ENCODE measurements at regions of chr13 and their contacts with region 1.

Region 1: GRCh38 chr13:51452361-51453206 is at the start of gene INTS6:
- DNase-seq: peak; percentile 98 to 100 (median 100)
- H3K4me3 ChIP-seq: peak within 1 kb of the TSS; percentile 62 to 82
- H3K4me3 Mint-ChIP-seq: peak within 1 kb of the TSS; percentile 89 to 96 (median 94)
- H3K27ac ChIP-seq: peak within 1 kb of the TSS; percentile 97
- H3K27ac Mint-ChIP-seq: peak within 1 kb of the TSS; percentile 94 to 99 (median 98)
- H3K4me1 ChIP-seq: peaks cover 42% of the 10 kb centered on the region
- H3K4me1 Mint-ChIP-seq: peaks cover 34 to 65% (median 40%) of the 10 kb centered on the region in 4 donors
- H3K27me3 ChIP-seq: no peaks in the 10 kb centered on the region
- H3K27me3 Mint-ChIP-seq: peaks cover 0 to 1% of the 10 kb centered on the region in 2 donors
- total RNA-seq, gene INTS6: 55.7 to 65.6 TPM

Region 2: GRCh38 chr13:49936085-49936940 is 1516.3 kb before region 1 on chr13 and contains the start of gene SPRYD7:
- CTCF ChIA-PET with region 1: no interaction called
- POLR2A ChIA-PET with region 1: interaction called, 3 read pairs
- intact Hi-C with region 1: loop called (anchors 5 kb)
- DNase-seq: peak; percentile 89 to 92 (median 92)
- H3K4me3 ChIP-seq: peak within 1 kb of the TSS; percentile 66 to 96
- H3K4me3 Mint-ChIP-seq: peak within 1 kb of the TSS; percentile 91 to 97 (median 95)
- H3K27ac ChIP-seq: peak within 1 kb of the TSS; percentile 63
- H3K27ac Mint-ChIP-seq: peak within 1 kb of the TSS; percentile 85 to 97 (median 94)
- H3K4me1 ChIP-seq: peaks cover 19% of the 10 kb centered on the region
- H3K4me1 Mint-ChIP-seq: peaks cover 12 to 23% (median 15%) of the 10 kb centered on the region in 4 donors
- H3K27me3 ChIP-seq: no peaks in the 10 kb centered on the region
- H3K27me3 Mint-ChIP-seq: no peaks in the 10 kb centered on the region
- total RNA-seq, gene SPRYD7: 3.3 to 5.1 TPM

Region 3: GRCh38 chr13:51435002-51435578 is 17.5 kb before region 1 on chr13:
- CTCF ChIA-PET with region 1: interaction called, 5 read pairs
- POLR2A ChIA-PET with region 1: interaction called, 68 read pairs
- intact Hi-C with region 1: loop called (anchors 2 kb)
- DNase-seq: peak in 4 of 5 donors; percentile 35 to 43 (median 42)
- H3K4me3 ChIP-seq: no peak overlapping the region
- H3K4me3 Mint-ChIP-seq: no peak overlapping the region
- H3K27ac ChIP-seq: no peak overlapping the region
- H3K27ac Mint-ChIP-seq: no peak overlapping the region
- H3K4me1 ChIP-seq: peaks cover 13% of the 10 kb centered on the region
- H3K4me1 Mint-ChIP-seq: peaks cover 12 to 20% (median 16%) of the 10 kb centered on the region in 4 donors
- H3K27me3 ChIP-seq: no peaks in the 10 kb centered on the region
- H3K27me3 Mint-ChIP-seq: no peaks in the 10 kb centered on the region

Region 4: DNA sequence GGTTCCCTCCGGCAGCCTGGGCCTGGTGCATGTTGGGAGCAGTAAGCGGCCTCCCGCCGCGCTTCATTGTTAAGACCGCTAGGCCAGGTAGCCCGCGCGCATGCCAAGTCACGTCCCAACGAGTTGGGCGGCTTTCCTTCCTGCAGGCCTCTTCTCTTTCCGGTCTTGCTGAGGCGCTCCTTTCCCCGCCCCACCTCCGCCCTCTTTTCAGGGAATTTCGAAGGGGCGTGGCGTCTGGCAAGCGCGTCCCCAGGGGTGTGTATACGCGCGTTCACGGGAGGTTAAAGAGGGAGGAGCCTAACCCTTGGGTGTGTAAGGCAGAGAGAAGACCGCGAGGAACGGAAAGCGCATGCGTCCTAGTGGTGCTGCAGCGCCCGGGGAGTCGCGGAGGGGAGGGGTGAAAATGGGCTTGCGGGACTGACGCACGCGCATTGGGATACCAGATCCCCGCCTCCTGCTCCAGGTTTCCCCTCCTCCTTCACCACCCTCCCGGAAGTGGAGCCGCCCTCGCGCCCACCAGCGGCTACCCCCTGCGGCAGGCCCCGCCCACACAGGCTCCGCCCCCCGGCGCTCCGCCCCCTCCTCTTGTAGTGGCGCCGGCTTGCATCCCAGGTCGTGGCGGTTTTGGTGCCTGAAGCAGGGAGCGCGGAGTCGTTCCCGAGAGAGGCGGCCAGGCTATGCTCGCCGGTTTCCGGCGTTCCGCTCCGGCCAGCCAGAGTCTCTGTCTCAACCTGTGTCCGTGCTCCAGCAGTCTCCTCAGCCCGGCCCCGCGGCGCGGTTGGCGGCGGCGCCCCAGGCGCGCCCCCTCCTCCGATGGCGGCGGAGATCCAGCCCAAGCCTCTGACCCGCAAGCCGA is 131.5 kb after region 1 on chr13 and contains the start of gene WDFY2:
- CTCF ChIA-PET with region 1: interaction called, 10 read pairs
- POLR2A ChIA-PET with region 1: interaction called, 205 read pairs
- intact Hi-C with region 1: loop called (anchors 1 kb)
- DNase-seq: peak; percentile 99 to 100 (median 100)
- H3K4me3 ChIP-seq: peak within 1 kb of the TSS; percentile 65 to 92
- H3K4me3 Mint-ChIP-seq: peak within 1 kb of the TSS; percentile 97 to 100 (median 99)
- H3K27ac ChIP-seq: peak within 1 kb of the TSS; percentile 88
- H3K27ac Mint-ChIP-seq: peak within 1 kb of the TSS; percentile 96 to 100 (median 100)
- H3K4me1 ChIP-seq: peaks cover 26% of the 10 kb centered on the region
- H3K4me1 Mint-ChIP-seq: peaks cover 27 to 44% (median 35%) of the 10 kb centered on the region in 4 donors
- H3K27me3 ChIP-seq: no peaks in the 10 kb centered on the region
- H3K27me3 Mint-ChIP-seq: no peaks in the 10 kb centered on the region
- total RNA-seq, gene WDFY2: 20.0 to 21.8 TPM

Region 5: DNA sequence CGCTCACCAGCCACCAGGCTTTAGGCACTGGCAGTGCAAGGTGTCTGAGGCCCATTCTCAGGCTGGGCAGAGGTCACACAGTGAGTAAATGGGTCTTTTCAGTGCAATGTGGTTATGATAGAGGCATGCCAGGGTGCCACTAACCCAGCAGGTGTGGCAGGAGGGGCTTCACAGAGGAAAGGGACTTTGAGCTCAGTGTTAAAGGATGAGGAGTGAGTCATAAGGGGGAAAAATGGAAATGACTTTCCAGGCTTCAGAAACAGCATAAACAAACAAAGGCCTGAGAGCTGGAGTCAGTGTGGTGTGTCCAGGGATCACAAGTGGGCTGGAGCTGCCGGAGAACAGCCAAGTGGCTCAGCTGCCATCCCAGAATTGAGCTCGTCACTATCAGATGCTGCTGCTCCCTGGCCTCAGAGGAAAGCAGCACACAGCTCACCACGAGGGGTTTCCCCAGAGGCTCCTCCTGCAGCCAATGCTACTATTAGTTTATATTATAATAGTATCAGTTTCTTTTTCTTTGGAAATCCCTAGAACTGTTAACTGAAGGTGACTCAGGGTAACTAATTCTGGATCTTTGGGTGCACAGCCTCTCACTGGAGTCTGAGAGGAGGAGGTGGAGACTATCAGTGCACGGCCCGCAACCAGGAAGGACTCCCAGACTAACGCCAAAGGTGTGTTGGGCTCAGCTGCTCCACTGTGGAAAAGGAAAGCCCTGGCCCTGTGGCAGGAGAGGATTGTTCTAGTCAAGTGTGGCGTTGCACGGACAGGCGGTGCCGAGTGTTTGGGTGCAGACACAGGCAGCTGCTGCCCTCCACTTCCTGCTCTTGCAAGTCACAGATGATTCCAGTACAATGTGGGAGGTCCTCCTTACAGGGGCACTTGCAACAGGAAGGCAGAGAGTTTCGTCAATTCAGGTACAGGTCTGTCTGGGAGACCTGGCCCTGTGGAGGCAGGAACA is 311.9 kb after region 1 on chr13:
- CTCF ChIA-PET with region 1: interaction called, 8 read pairs
- POLR2A ChIA-PET with region 1: interaction called, 37 read pairs
- intact Hi-C with region 1: no loop called
- DNase-seq: peak; percentile 35 to 82 (median 55)
- H3K4me3 ChIP-seq: peak overlapping the region in 1 of 2 donors; percentile 17
- H3K4me3 Mint-ChIP-seq: peak overlapping the region; percentile 80 to 91 (median 82)
- H3K27ac ChIP-seq: peak overlapping the region; percentile 80
- H3K27ac Mint-ChIP-seq: peak overlapping the region; percentile 92 to 96 (median 95)
- H3K4me1 ChIP-seq: peaks cover 22% of the 10 kb centered on the region
- H3K4me1 Mint-ChIP-seq: peaks cover 15 to 35% (median 24%) of the 10 kb centered on the region in 4 donors
- H3K27me3 ChIP-seq: no peaks in the 10 kb centered on the region
- H3K27me3 Mint-ChIP-seq: no peaks in the 10 kb centered on the region

Region 6: GRCh38 chr13:51825165-51825592 is 372.6 kb after region 1 on chr13:
- CTCF ChIA-PET with region 1: interaction called, 4 read pairs
- POLR2A ChIA-PET with region 1: interaction called, 117 read pairs
- intact Hi-C with region 1: loop called (anchors 1 kb)
- DNase-seq: peak; percentile 57 to 84 (median 79)
- H3K4me3 ChIP-seq: peak overlapping the region; percentile 31 to 56
- H3K4me3 Mint-ChIP-seq: peak overlapping the region; percentile 86 to 95 (median 90)
- H3K27ac ChIP-seq: peak overlapping the region; percentile 65
- H3K27ac Mint-ChIP-seq: peak overlapping the region; percentile 88 to 95 (median 94)
- H3K4me1 ChIP-seq: peaks cover 81% of the 10 kb centered on the region
- H3K4me1 Mint-ChIP-seq: peaks cover 56 to 99% (median 77%) of the 10 kb centered on the region in 4 donors
- H3K27me3 ChIP-seq: no peaks in the 10 kb centered on the region
- H3K27me3 Mint-ChIP-seq: no peaks in the 10 kb centered on the region

Region 7: DNA sequence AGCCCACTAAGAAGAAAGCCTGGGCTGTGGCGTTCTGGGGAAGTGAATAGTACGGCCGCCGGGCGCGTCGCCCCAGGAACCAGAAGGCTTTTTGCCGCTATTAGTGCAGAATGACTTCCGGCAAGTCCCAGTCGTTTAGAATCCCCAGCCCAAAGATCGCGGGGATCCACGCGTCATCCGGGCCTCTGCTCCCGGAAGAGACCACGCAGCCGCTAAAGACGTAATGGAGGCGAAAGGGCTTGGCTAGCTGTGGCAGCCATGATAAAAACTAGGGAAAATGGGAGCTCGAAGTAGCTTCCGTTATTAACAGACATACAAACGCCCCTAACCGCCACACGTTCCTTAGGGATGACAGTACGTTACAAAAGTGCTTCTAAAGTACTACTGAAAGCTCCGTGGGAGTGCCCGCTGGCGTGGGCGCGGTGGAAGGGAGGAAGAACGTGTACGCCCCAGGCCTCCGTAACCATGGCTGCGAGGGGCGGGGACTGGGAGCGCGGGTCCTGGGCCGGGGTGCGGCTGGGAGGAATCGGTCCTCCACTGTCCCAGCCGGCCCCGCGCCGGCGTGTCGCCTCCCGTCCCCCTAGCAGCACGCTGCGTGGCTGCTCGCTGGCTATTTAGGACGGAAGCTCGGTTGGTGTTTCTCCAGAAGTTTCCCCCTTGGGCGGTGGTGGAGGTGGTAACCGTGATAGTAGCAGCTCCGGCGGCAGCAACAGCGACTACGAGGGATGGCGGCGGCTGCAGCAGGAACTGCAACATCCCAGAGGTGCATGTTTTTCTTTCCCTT is 1199.8 kb after region 1 on chr13 and contains the start of gene SUGT1:
- CTCF ChIA-PET with region 1: interaction called, 3 read pairs
- POLR2A ChIA-PET with region 1: interaction called, 14 read pairs
- intact Hi-C with region 1: loop called (anchors 2 kb)
- DNase-seq: peak; percentile 96 to 98 (median 97)
- H3K4me3 ChIP-seq: peak within 1 kb of the TSS; percentile 61 to 94
- H3K4me3 Mint-ChIP-seq: no peak within 1 kb of the TSS
- H3K27ac ChIP-seq: peak within 1 kb of the TSS; percentile 96
- H3K27ac Mint-ChIP-seq: no peak within 1 kb of the TSS
- H3K4me1 ChIP-seq: peaks cover 46% of the 10 kb centered on the region
- H3K4me1 Mint-ChIP-seq: peaks cover 8 to 16% (median 13%) of the 10 kb centered on the region in 4 donors
- H3K27me3 ChIP-seq: no peaks in the 10 kb centered on the region
- H3K27me3 Mint-ChIP-seq: no peaks in the 10 kb centered on the region
- total RNA-seq, gene SUGT1: 40.4 to 42.5 TPM

Measured in CD4-positive, alpha-beta memory T cell (primary cell).